BJ (cell line): ENCODE measurements at regions of chr2 and their contacts with region 1.

Region 1: DNA sequence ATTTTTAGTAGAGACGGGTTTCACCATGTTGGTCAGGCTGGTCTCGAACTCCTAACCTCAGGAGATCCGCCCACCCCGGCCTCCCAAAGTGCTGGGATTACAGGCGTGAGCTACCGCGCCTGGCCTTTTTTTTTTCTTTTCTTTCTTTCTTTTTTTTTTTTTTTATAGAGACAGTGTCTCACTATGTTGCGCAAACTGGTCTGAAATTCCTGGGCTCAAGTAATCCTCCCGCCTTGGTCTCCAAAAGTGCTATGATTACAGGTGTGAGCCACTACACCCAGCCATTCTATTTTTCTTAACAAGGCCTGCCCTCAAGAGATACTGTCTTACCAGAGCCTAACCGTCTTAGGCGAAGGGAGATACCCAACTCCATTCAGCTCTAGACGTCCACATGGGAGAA is 11.4 kb upstream of the NBEAL1 start:
- DNase-seq: no peak
- H3K4me3 ChIP-seq: no peak overlapping the region
- H3K27me3 ChIP-seq: no peaks in the 10 kb centered on the region
- CTCF ChIP-seq: no peak

Region 2: DNA sequence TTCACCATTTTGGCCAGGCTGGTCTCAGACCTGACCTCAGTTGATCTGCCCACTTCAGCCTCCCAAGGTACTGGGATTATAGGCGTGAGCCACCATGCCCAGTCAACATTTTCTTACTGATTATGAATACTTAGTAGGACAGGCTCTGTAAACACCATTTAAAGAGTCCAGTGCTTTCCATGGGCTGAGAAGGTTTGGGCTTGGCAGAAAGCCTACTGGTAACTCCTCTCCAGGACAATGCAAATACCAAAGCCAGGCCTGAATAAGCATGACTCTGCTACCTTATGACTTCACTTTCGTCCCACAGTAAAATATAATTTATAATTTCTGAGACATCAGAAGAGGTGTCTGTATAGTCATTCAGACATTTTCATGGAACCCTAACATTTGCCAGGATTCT is 428.8 kb before region 1 on chr2:
- CTCF ChIA-PET with region 1: no interaction called
- POLR2A ChIA-PET with region 1: no interaction called
- DNase-seq: no peak
- H3K4me3 ChIP-seq: no peak overlapping the region
- H3K27me3 ChIP-seq: no peaks in the 10 kb centered on the region
- CTCF ChIP-seq: no peak

Region 3: GRCh38 chr2:202989749-202990148 is 13.6 kb before region 1 on chr2:
- CTCF ChIA-PET with region 1: no interaction called
- POLR2A ChIA-PET with region 1: interaction called, 12 read pairs
- DNase-seq: no peak
- H3K4me3 ChIP-seq: no peak overlapping the region
- H3K27me3 ChIP-seq: no peaks in the 10 kb centered on the region
- CTCF ChIP-seq: no peak

Region 4: DNA sequence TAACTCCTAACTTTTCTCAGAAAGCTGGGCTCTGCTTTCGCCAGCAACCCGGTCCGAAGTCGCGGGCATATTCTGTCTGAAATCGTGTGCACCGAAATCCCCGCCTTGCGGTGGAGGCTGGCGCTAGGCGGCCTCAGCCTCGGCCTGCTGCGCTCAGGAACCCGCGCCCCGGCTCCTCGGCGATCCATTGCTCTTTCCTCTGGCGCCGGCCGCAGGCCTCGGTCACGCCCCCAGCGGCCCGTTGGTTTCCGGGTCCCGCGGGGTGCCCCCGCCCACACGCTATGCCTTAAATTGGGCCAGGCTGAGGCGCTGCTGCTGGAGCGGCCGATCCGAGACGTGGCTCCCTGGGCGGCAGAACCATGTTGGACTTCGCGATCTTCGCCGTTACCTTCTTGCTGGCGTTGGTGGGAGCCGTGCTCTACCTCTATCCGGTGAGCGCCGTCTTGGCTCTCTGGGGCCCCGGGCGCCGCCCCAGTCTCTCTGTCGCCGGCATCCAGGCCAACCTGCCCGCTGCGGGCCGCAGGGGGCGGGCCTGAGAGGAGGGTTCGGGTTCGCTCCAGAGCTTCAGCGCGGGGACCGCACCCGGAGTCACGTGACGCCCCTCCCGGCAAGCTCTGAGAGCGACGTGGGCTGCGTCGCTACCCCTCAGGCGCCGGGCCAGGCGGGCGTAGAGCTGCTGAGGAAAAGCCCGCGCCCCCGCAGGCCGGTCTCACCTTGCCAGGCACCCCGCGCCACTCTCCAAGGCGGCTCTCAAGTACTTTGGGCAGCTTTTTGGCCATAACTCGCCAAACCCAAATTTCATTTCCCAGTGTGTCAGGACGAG is 235.6 kb after region 1 on chr2 and contains the start of gene CYP20A1:
- CTCF ChIA-PET with region 1: no interaction called
- POLR2A ChIA-PET with region 1: no interaction called
- DNase-seq: peak; percentile 77
- H3K4me3 ChIP-seq: peak within 1 kb of the TSS; percentile 60
- H3K27me3 ChIP-seq: no peaks in the 10 kb centered on the region
- CTCF ChIP-seq: peak; percentile 53
- polyA plus RNA-seq, gene CYP20A1: 7.7 and 14.4 TPM in 2 replicates